HepG2 (cell line): ENCODE measurements at regions of chr1 and their contacts with region 1.

Region 1: GRCh38 chr1:185681034-185681633 is 53.1 kb upstream of the HMCN1 start:
- DNase-seq: peak; percentile 50
- ATAC-seq: peak; percentile 84
- H3K4me3 ChIP-seq: no peak overlapping the region
- H3K27ac ChIP-seq: no peak overlapping the region
- H3K4me1 ChIP-seq: peaks cover 9% of the 10 kb centered on the region
- H3K27me3 ChIP-seq: peaks cover 0 to 12% of the 10 kb centered on the region in 2 experiments; a peak in 1 of 5 replicates
- CTCF ChIP-seq: peak; percentile 77
- EP300 ChIP-seq: no peak
- POLR2A ChIP-seq: no peak
- RAD21 ChIP-seq: peak; percentile 65; the same call in 1 of the 2 replicates

Region 2: DNA sequence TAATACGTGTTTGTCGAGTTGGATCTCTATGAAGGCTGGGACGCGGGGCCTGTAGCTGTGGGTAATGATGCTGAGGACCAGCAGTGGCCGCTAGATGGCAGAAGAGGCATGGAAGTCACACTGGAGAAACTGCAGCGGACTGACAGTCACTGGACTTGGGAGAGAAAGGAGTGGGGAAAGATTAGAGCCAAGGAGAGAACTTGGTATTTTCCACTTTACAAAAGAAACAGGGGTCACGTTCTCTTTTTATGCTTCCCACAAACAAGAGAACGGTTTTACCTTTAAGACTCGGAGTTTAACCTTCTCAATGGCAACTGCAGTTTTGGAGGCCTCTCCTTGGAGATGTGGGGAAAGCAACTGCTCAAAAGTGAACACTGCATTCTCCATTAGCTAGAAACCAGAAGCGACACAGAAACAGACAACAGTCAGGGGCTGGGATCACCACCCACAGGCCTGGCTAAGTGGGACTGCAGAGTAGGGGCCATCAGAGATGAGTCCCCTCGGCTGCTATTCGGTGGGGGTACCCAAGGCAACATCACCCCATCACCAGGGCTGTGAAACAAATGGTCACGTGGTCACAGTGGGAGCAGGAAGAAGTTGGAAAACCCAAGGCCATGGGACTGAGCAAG is 875.4 kb before region 1 on chr1:
- CTCF ChIA-PET with region 1: no interaction called
- POLR2A ChIA-PET with region 1: no interaction called
- in situ Hi-C with region 1: loop called (anchors 25 kb)
- intact Hi-C with region 1: loop called (anchors 2 kb)
- DNase-seq: peak; percentile 65
- ATAC-seq: peak; percentile 100
- H3K4me3 ChIP-seq: no peak overlapping the region
- H3K27ac ChIP-seq: no peak overlapping the region
- H3K4me1 ChIP-seq: peaks cover 9% of the 10 kb centered on the region
- H3K27me3 ChIP-seq: 0 out of 5 replicates have a peak, but pooled peaks cover 0 to 3% of the 10 kb centered on the region in 2 experiments
- CTCF ChIP-seq: peak; percentile 95
- EP300 ChIP-seq: no peak
- POLR2A ChIP-seq: no peak
- RAD21 ChIP-seq: peak; percentile 86

Region 3: GRCh38 chr1:185520188-185520935 is 160.8 kb before region 1 on chr1:
- CTCF ChIA-PET with region 1: no interaction called
- POLR2A ChIA-PET with region 1: no interaction called
- in situ Hi-C with region 1: no loop called
- intact Hi-C with region 1: no loop called
- DNase-seq: no peak
- ATAC-seq: no peak
- H3K4me3 ChIP-seq: no peak overlapping the region
- H3K27ac ChIP-seq: no peak overlapping the region
- H3K4me1 ChIP-seq: no peaks in the 10 kb centered on the region
- H3K27me3 ChIP-seq: no peaks in the 10 kb centered on the region
- CTCF ChIP-seq: no peak
- EP300 ChIP-seq: no peak
- POLR2A ChIP-seq: no peak
- RAD21 ChIP-seq: no peak

Region 4: GRCh38 chr1:185595835-185596667 is 85.1 kb before region 1 on chr1:
- CTCF ChIA-PET with region 1: interaction called, 3 read pairs
- POLR2A ChIA-PET with region 1: no interaction called
- in situ Hi-C with region 1: no loop called
- intact Hi-C with region 1: loop called (anchors 1 kb)
- DNase-seq: peak; percentile 46
- ATAC-seq: peak; percentile 90
- H3K4me3 ChIP-seq: no peak overlapping the region
- H3K27ac ChIP-seq: no peak overlapping the region
- H3K4me1 ChIP-seq: peaks cover 8% of the 10 kb centered on the region; the same call in 1 of the 2 replicates
- H3K27me3 ChIP-seq: no peaks in the 10 kb centered on the region
- CTCF ChIP-seq: peak; percentile 70
- EP300 ChIP-seq: no peak
- POLR2A ChIP-seq: no peak
- RAD21 ChIP-seq: peak; percentile 26; the same call in 1 of the 2 replicates

Region 5: GRCh38 chr1:185652348-185652747 is 28.8 kb before region 1 on chr1:
- CTCF ChIA-PET with region 1: interaction called, 8 read pairs
- POLR2A ChIA-PET with region 1: no interaction called
- in situ Hi-C with region 1: no loop called
- intact Hi-C with region 1: loop called (anchors 1 kb)
- DNase-seq: peak; percentile 20
- ATAC-seq: no peak
- H3K4me3 ChIP-seq: no peak overlapping the region
- H3K27ac ChIP-seq: no peak overlapping the region
- H3K4me1 ChIP-seq: peaks cover 26% of the 10 kb centered on the region
- H3K27me3 ChIP-seq: no peaks in the 10 kb centered on the region
- CTCF ChIP-seq: peak; percentile 42
- EP300 ChIP-seq: no peak
- POLR2A ChIP-seq: no peak
- RAD21 ChIP-seq: no peak

Region 6: GRCh38 chr1:185790194-185790735 is 109.1 kb after region 1 on chr1:
- CTCF ChIA-PET with region 1: no interaction called
- POLR2A ChIA-PET with region 1: no interaction called
- in situ Hi-C with region 1: no loop called
- intact Hi-C with region 1: no loop called
- DNase-seq: no peak
- ATAC-seq: no peak
- H3K4me3 ChIP-seq: no peak overlapping the region
- H3K27ac ChIP-seq: no peak overlapping the region
- H3K4me1 ChIP-seq: no peaks in the 10 kb centered on the region
- H3K27me3 ChIP-seq: no peaks in the 10 kb centered on the region
- CTCF ChIP-seq: no peak
- EP300 ChIP-seq: no peak
- POLR2A ChIP-seq: no peak
- RAD21 ChIP-seq: no peak

Region 7: DNA sequence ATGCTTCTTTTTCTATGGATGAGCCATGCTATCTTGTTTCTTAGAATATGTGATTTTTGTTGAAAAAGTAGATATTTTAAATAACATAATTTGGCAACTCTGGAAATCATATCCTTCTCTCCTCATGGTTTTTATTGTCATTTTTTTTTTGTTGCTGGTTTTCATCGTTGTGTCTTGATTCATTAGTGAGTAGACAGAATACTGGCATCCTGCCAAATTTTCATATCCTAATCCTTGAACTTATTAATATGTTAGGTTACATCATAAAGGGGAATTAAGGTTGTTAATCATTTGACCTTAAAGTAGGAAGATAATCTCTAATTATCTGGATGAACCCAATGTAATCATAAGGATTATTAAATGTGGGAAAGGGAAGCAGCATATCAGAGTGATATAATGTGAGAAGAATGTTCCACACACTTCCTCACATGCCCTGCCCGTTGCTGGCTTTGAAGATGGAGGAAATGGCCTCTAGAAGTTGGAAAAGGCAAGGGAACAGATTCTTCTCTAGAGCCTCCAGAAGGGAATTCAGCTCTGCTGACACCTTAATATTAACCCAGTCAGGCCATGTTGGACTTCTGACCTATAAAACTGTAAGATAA is 352.7 kb after region 1 on chr1:
- CTCF ChIA-PET with region 1: no interaction called
- POLR2A ChIA-PET with region 1: no interaction called
- in situ Hi-C with region 1: no loop called
- intact Hi-C with region 1: no loop called
- DNase-seq: no peak
- ATAC-seq: no peak
- H3K4me3 ChIP-seq: no peak overlapping the region
- H3K27ac ChIP-seq: no peak overlapping the region
- H3K4me1 ChIP-seq: no peaks in the 10 kb centered on the region
- H3K27me3 ChIP-seq: no peaks in the 10 kb centered on the region
- CTCF ChIP-seq: no peak
- EP300 ChIP-seq: no peak
- POLR2A ChIP-seq: no peak
- RAD21 ChIP-seq: no peak